GM13976 (cell line): ENCODE measurements at regions of chr14 and their contacts with region 1.

Region 1: DNA sequence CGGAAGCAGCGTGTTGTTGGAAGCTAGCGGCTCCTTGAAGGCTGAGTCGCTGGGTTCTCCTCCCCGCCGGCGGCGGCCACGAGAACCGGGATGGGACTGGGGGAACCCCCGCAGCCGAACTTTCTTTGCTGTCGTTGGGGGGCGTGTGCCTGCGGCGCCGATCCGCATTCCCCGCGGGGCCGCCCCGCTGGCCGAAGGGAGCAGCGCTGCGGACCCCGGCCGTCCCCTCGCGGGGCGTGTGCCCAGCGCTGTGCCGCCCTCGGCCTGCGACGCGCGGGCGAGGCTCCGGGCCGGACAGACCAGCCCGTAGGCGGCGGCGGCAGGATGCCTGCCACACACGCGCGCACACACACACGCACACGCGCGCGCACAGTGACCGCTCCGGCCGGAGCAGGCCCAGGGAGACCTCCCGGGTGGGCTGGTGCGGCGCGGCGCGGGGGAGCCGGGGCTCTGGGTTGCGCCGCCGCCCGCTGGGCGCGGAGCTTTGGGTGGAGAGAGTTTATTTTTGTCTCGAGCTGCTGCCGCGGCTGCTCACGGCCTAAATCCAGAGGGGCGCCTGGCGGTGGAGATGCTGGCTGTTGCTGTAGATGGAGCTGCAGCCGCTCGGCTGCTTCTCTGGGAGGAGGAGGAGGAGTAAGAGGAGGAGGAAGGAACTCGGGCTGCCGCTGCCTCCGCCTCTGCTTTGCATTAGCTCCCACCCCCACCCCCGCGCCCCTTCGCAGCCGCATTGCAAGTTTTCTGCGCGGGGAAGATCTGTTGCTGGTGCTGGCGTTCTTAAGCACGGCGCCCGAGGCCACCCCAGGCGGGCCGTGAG is at the start of gene SAMD4A:
- DNase-seq: peak; percentile 79
- CTCF ChIP-seq: peak; percentile 27

Region 2: GRCh38 chr14:54440873-54441868 is 125.4 kb before region 1 on chr14 and contains the start of gene CNIH1:
- in situ Hi-C with region 1: no loop called
- DNase-seq: peak; percentile 97
- CTCF ChIP-seq: peak; percentile 97

Region 3: GRCh38 chr14:54773171-54773975 is 206.8 kb after region 1 on chr14:
- in situ Hi-C with region 1: loop called (anchors 5 kb)
- DNase-seq: peak; percentile 82
- CTCF ChIP-seq: peak; percentile 29